ENCODE measurements at regions of chr16 and their contacts with region 1.

Region 1: GRCh38 chr16:27748868-27749546 is 199.1 kb downstream of the KATNIP start:
- DNase-seq: peak; percentile 64 to 88
- H3K4me3 ChIP-seq: no peak overlapping the region
- H3K27ac ChIP-seq: no peak overlapping the region
- H3K4me1 ChIP-seq: peaks cover 10% of the 10 kb centered on the region
- H3K27me3 ChIP-seq: no peaks in the 10 kb centered on the region
- CTCF ChIP-seq: no peak

Region 2: DNA sequence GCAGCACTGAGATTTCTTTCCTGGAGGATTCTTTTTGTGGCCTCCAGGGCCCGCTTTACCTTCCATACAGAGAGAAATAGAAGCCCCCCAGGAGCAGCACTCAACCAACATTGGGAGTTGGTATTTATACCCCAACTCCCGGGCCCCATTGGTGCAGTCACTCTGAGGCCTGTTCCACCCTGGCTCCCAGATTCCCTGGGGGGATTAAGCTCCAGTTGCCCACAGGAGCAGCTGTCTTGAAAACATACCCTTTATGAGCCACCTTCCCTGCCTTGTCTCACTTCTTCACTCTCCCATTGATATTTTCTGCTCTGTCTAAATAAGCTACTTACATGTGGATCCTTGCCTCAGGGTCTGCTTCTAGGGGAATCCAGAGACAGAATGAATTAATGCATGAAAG is 31.3 kb before region 1 on chr16:
- CTCF ChIA-PET with region 1: no interaction called
- POLR2A ChIA-PET with region 1: no interaction called
- intact Hi-C with region 1: loop called (anchors 1 kb)
- DNase-seq: no peak
- H3K4me3 ChIP-seq: no peak overlapping the region
- H3K27ac ChIP-seq: no peak overlapping the region
- H3K4me1 ChIP-seq: no peaks in the 10 kb centered on the region
- H3K27me3 ChIP-seq: no peaks in the 10 kb centered on the region
- CTCF ChIP-seq: no peak

Region 3: DNA sequence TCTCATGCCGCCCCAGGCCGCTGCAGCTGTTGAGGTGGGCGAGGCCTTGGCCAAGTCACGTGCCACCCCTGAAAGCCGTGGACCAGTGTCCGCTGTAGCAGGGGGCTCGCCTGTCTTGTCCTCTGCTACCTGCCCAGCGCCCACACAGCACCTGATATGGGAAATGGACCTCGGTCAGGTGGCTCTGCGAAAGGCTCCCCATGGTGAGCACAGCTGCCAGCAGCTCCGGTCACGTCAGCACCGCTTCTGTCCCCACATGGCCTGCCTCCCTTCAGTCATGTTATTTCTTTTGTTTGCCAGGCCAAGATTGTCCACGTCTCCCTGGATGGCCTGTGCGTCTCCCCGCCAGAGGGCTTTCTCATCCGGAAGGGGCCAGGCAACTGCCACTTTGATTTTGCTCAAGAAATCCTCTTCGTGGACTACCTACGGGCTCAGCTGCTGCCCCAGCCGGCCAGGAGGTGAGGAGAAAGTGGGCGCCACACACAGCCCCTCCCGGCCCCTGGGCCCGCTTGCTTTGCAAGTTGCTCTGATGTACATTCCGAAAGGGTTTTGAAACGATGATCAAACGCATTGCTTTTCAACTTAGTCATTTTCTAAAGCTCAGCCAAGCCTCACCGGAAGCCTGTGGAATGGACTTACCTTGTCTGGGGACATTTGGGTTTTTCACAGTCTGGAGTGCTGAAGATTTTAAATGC is 20.7 kb after region 1 on chr16:
- CTCF ChIA-PET with region 1: no interaction called
- POLR2A ChIA-PET with region 1: interaction called, 6 read pairs
- intact Hi-C with region 1: loop called (anchors 1 kb)
- DNase-seq: peak in 1 of 2 experiments; percentile 82
- H3K4me3 ChIP-seq: no peak overlapping the region
- H3K27ac ChIP-seq: no peak overlapping the region
- H3K4me1 ChIP-seq: no peaks in the 10 kb centered on the region
- H3K27me3 ChIP-seq: no peaks in the 10 kb centered on the region
- CTCF ChIP-seq: no peak

Measured in PC-9 (cell line).